ENCODE measurements at regions of chr17 and their contacts with region 1.

Region 1: DNA sequence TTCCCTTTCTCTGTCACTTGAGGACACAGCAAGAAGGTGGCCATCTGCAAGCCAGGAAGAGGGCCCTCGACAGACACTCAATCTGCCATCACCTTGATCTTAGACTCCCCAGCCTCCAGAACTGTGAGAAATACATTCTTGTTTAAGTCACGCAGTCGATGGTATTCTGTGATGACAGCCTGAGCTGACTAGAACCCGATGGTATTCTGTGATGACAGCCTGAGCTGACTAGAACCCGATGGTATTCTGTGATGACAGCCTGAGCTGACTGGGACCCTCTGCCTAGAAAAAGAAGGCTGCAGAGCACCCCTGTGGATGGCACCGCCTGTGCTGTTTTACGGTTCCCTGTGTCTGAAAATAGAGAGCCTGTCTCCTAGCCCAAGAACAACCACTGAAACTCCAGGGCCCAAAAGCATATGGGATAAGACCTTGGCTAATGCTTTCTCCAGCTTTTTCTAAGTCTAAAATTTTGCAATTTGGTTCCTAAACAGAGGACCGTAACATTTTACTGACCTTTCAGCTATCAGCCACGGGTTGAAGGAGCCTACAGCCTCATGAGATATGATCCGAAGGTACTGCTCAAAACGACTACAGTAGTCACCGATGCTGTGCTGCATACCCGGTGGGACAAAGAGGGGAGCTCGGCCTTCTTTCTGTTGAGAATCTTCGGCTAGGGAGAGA is 33.1 kb upstream of the PITPNM3 start:
- DNase-seq: no peak
- H3K4me3 ChIP-seq: no peak overlapping the region
- H3K27ac ChIP-seq: no peak overlapping the region
- H3K4me1 ChIP-seq: no peaks in the 10 kb centered on the region
- H3K27me3 ChIP-seq: no peaks in the 10 kb centered on the region
- CTCF ChIP-seq: no peak
- POLR2A ChIP-seq: no peak

Region 2: GRCh38 chr17:6643451-6644125 is 54.2 kb after region 1 on chr17:
- intact Hi-C with region 1: loop called (anchors 2 kb)
- DNase-seq: no peak
- H3K4me3 ChIP-seq: no peak overlapping the region
- H3K27ac ChIP-seq: no peak overlapping the region
- H3K4me1 ChIP-seq: peaks cover 5 to 19% of the 10 kb centered on the region in 2 donors
- H3K27me3 ChIP-seq: no peaks in the 10 kb centered on the region
- CTCF ChIP-seq: no peak
- POLR2A ChIP-seq: no peak